ENCODE measurements at regions of chr11 and their contacts with region 1.

Region 1: DNA sequence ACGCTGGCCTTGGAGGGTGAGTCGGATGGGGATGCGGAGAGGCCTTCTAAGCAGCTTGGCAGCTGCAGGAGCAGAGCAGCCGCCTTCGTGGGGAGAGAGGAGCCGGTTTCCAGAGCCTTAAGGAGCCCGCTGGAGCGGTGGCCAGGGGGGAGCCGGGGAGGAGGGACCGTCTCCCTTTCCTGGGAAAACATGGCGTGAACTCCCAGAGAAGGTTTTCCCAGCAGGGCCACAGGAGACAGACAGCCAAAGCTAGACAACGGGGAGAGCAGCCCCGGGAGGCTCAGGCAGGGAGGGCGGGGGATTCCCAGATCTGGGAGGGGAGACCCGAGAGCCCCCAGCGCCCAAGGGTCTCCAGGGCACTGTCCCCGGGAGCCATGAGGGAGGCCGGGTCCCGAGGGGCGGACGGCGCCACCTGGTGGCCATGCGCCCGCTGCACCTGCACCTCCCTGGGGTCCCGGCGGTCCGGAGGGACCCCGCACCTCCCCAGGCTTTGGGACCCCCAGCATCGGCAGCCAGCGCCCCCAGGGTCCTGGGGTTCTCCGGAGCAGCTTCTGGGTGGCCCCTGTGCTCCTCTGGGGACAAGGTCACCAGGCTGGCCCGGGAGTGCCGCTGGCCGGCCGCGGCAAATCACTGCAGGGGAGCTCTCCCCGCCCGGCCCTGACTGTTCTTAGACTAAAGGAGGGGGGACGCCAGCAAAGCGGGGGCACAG is 2.4 kb upstream of the SYT8 start:
- DNase-seq: peak; percentile 58
- H3K4me3 ChIP-seq: no peak overlapping the region
- H3K27ac ChIP-seq: no peak overlapping the region
- H3K4me1 ChIP-seq: no peaks in the 10 kb centered on the region
- CTCF ChIP-seq: peak; percentile 92

Region 2: DNA sequence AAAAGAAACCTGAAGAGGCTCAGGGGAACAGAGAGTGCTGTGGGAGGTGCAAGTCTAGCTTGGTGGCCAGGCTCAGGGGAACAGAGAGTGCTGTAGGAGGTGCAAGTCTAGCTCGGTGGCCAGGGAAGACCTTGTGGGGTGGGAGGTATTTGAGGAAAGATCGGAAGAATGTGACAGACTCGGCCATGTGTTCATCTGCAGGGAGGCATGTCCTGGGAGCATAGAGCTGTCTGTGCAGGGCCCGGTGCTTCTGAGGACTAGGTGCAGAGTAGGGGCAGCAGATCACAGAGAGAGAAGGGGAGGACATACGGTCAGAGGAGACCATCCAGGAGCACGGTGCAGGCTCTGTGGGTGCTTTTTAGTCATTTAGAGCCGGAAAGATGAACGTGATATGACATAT is 92.8 kb before region 1 on chr11:
- CTCF ChIA-PET with region 1: no interaction called
- POLR2A ChIA-PET with region 1: no interaction called
- intact Hi-C with region 1: no loop called
- DNase-seq: no peak
- H3K4me3 ChIP-seq: no peak overlapping the region
- H3K27ac ChIP-seq: no peak overlapping the region
- H3K4me1 ChIP-seq: no peaks in the 10 kb centered on the region
- CTCF ChIP-seq: no peak

Region 3: DNA sequence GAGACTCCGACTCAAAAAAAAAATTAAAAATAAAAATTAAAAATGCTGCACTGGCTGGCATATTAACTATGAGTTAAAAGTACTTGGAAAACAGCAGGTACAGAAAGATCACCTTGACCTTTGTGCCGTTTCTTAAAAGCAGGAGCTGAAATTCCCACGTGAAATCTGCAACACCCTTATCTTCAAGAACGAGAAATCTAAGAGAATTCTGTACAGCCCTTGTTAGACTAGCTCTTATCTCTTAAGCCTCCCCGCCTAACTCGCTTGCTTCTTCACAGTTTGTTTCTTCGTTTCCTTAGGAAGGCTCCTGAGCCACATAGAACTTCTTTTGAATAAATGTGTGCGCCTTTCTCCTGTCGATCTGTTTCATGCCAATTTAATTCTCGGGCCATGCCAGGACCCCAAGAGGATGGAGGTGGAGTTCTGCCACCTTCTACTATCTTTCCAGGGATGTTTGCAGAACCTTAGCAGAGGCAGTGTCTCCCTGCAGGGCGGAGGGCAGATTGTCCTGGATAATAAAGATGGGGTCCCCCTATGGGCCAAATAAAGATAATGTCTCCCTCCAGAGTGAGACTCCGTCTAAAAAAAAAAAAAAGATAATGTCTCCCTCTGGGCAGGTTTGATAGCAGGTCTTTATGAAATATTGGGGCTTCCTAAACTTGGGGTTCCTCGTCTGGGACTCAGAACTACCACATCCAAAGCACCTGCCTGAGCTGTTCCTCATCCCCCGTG is 24.9 kb before region 1 on chr11:
- CTCF ChIA-PET with region 1: interaction called, 10 read pairs
- POLR2A ChIA-PET with region 1: no interaction called
- intact Hi-C with region 1: no loop called
- DNase-seq: no peak
- H3K4me3 ChIP-seq: no peak overlapping the region
- H3K27ac ChIP-seq: no peak overlapping the region
- H3K4me1 ChIP-seq: no peaks in the 10 kb centered on the region
- CTCF ChIP-seq: 0 out of 2 replicates have a peak, but pooled peaks have one; percentile 30

Region 4: DNA sequence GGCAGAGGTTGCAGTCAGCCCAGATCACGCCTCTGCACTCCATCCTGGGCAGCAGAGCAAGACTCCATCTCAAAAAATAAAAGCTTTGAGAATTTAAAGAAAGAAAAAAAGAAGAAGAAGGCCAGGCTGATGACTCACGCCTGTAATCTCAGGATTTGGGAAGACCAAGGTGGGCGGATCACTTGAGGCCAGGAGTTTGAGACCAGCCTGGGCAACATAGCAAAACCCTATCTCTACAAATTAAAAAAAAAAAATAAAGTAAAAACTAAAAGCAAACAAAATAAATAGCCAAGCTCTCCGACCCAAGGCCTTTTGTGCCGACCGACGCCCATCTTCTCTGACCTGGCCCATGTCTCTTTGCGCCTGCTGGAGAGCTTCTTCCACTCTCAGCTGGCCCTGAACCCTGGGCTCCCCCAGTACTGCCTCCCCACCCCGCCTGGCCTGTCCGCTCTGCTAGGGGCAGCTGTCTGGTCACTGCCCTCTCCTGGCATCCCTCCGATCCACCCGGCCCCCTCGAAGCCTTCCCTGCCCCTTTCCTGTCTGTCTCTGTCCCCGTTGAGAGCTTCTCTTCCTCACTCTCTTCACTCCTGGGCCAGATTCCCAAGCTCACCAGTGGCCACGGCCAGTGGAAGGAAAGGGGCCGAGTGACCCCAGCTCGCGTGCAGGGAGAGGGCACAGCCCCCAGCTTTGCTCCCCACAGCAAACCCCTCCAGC is 15.7 kb after region 1 on chr11:
- CTCF ChIA-PET with region 1: no interaction called
- POLR2A ChIA-PET with region 1: no interaction called
- intact Hi-C with region 1: no loop called
- DNase-seq: no peak
- H3K4me3 ChIP-seq: no peak overlapping the region
- H3K27ac ChIP-seq: no peak overlapping the region
- H3K4me1 ChIP-seq: peaks cover 49% of the 10 kb centered on the region
- CTCF ChIP-seq: no peak

Measured in OCI-LY7 (cell line).